CD8-positive, alpha-beta T cell (primary cell): ENCODE measurements at regions of chr16 and their contacts with region 1.

Region 1: DNA sequence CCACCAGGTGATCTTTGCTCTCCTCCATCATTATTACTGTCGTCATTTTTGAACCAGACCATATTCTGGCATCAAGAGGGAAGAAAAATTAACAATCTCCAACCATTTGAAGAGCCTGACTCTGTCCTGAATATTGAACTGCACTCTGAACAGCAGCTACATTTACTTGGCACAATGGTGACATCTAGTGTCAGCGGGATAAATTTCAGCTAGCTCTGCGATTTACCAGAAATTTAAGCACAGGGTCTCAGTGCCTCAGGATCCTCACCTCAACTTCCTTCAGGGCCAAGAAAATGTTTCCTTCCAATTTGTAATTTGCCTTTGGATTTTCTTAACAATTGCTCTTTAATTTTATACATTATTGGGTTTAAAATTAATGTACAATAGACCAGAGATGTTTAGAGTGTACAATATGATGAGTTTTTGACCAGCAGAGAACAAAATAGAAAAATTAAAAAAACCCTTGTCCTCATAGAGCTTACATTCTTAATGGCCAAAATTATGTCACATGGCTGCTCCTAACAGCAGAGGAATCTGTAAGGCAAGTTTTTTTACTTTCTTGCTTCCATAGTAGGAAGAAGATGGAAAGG is 10.7 kb upstream of the ZNF19 start:
- DNase-seq: peak; percentile 18 to 78 (median 51)
- ATAC-seq: peak; percentile 73
- H3K4me3 ChIP-seq: no peak overlapping the region
- H3K4me3 Mint-ChIP-seq: no peak overlapping the region
- H3K27ac ChIP-seq: no peak overlapping the region
- H3K27ac Mint-ChIP-seq: no peak overlapping the region
- H3K4me1 ChIP-seq: no peaks in the 10 kb centered on the region
- H3K4me1 Mint-ChIP-seq: no peaks in the 10 kb centered on the region
- H3K27me3 ChIP-seq: peaks cover 0 to 2% of the 10 kb centered on the region in 2 experiments
- H3K27me3 Mint-ChIP-seq: peaks cover 15% of the 10 kb centered on the region
- CTCF ChIP-seq: peak; percentile 74

Region 2: GRCh38 chr16:71412270-71413160 is 87.4 kb before region 1 on chr16:
- CTCF ChIA-PET with region 1: interaction called, 209 read pairs
- POLR2A ChIA-PET with region 1: interaction called, 3 read pairs
- intact Hi-C with region 1: loop called (anchors 1 kb)
- DNase-seq: peak; percentile 30 to 80 (median 69)
- ATAC-seq: peak; percentile 65
- H3K4me3 ChIP-seq: no peak overlapping the region
- H3K4me3 Mint-ChIP-seq: no peak overlapping the region
- H3K27ac ChIP-seq: no peak overlapping the region
- H3K27ac Mint-ChIP-seq: no peak overlapping the region
- H3K4me1 ChIP-seq: peaks cover 6% of the 10 kb centered on the region
- H3K4me1 Mint-ChIP-seq: peaks cover 11% of the 10 kb centered on the region
- H3K27me3 ChIP-seq: no peaks in the 10 kb centered on the region
- H3K27me3 Mint-ChIP-seq: peaks cover 14% of the 10 kb centered on the region
- CTCF ChIP-seq: peak; percentile 82

Region 3: DNA sequence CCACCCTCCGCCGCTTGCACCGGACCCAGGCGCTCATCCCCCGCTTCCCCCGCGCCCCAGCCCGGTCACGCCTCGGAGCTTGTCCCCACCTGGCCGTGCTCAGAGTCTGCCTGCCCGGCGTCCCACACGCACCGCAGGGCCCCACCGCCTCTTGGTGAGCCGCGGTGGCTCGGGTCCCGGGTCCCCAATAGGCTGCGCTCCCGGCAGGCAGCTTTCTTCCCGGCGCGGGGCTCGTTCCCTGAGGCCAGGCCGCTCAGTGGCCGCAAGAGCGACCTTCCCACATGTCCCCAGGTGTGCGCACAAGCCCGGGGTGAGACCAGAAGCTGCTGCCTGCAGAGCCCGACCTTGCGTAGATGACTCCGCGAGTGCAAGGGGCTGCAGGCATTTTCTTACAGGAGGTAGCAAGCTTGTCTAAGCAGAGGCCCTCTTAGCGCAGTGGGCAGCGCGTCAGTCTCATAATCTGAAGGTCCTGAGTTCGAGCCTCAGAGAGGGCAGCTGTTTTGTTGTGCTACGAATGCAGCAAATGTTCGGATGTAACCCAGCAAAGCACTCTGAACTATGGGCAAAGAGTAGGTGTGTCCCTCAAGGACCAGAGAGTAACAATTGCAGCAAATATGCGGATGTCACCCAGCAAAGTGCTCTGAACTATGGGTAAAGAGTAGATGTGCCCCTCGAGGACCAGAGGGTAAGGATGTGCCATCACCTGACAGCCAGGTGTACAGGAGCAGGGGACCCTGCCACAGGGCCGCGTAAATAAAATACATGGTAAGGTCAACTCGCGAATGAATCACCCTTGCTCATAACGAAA is 73.6 kb before region 1 on chr16:
- CTCF ChIA-PET with region 1: interaction called, 13 read pairs
- POLR2A ChIA-PET with region 1: no interaction called
- intact Hi-C with region 1: no loop called
- DNase-seq: peak in 4 of 9 experiments; percentile 25 to 85 (median 62)
- ATAC-seq: peak; percentile 91
- H3K4me3 ChIP-seq: peak overlapping the region in 1 of 2 experiments; percentile 43
- H3K4me3 Mint-ChIP-seq: peak overlapping the region; percentile 81
- H3K27ac ChIP-seq: peak overlapping the region in 1 of 2 experiments; percentile 22
- H3K27ac Mint-ChIP-seq: peak overlapping the region; percentile 88
- H3K4me1 ChIP-seq: no peaks in the 10 kb centered on the region
- H3K4me1 Mint-ChIP-seq: peaks cover 18% of the 10 kb centered on the region
- H3K27me3 ChIP-seq: peaks cover 0 to 6% of the 10 kb centered on the region in 2 experiments
- H3K27me3 Mint-ChIP-seq: peaks cover 25% of the 10 kb centered on the region
- CTCF ChIP-seq: no peak

Region 4: DNA sequence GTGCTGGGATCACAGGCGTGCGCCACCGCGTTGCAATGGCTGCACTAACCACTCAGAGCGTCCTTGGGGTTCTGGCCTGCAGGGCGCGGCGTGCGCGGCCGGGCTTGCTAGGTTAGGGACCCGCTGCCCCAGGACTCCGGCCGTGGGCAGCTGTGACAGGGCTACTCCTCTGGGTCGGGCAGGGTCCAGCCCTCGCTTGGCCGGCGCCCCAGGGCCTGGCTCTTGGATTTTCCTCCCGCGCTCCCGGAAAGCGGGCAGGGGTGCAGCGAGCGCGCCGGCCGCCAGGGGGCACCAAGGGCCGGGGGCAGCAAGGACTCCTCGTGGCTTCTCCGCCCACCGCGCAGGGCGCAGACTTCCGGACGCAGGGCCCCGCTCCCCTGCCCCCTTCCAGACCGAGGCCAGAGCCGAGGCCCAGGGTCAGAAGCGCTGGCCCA is 58.5 kb before region 1 on chr16:
- CTCF ChIA-PET with region 1: interaction called, 5 read pairs
- POLR2A ChIA-PET with region 1: no interaction called
- intact Hi-C with region 1: loop called (anchors 1 kb)
- DNase-seq: peak in 4 of 9 experiments; percentile 27 to 49 (median 34)
- ATAC-seq: no peak
- H3K4me3 ChIP-seq: no peak overlapping the region
- H3K4me3 Mint-ChIP-seq: no peak overlapping the region
- H3K27ac ChIP-seq: no peak overlapping the region
- H3K27ac Mint-ChIP-seq: no peak overlapping the region
- H3K4me1 ChIP-seq: no peaks in the 10 kb centered on the region
- H3K4me1 Mint-ChIP-seq: no peaks in the 10 kb centered on the region
- H3K27me3 ChIP-seq: no peaks in the 10 kb centered on the region
- H3K27me3 Mint-ChIP-seq: peaks cover 28% of the 10 kb centered on the region
- CTCF ChIP-seq: peak; percentile 40

Region 5: DNA sequence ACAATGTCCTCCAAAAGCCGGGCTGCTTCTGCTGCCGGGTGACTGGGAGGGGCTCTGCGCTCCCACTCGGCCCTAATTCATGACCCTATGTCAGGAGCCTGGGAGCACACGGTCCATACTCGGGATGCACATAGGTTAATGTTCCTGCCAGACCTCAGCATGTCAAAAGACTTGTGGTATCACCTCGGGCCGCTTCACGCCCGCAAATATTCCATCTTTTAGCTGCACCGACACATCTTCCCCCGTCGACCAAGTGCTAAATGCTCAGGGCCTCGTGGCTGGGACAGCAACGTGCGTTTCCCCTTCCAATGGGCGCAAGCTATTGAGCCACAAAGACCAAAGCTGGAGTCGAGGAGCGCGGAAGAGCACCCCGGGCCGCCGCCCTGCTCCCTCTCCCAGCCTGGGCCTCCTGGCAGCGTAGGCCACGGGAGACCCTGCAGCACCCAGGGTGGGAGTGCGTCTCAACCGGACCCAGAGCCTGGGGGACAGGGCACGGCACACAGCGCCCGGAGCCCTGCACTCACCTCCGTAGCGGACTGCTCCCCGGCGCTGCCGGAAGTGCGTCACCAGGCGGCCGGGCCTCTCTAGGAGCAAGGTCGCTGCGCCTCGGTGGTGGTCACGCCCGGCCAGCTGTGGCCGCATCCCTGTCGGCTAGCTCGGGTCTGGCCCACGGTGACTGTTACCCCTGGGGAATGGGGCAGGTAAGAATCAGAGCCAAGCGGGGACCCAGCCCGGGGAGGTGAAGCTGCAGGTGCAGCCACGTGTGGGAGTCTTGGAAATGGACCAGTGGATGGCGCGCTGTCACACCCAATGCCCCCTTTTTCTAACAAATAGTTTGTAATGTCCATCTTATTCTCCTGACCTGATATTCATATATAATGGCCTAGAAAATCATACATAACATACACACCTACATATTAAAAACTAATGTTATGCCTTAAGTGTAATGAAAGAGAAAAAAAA is 37.9 kb before region 1 on chr16 and contains the start of gene ZNF23:
- CTCF ChIA-PET with region 1: interaction called, 3 read pairs
- POLR2A ChIA-PET with region 1: no interaction called
- intact Hi-C with region 1: loop called in 1 of 2 experiments (anchors 5 kb)
- DNase-seq: peak; percentile 55 to 88 (median 79)
- ATAC-seq: peak; percentile 95
- H3K4me3 ChIP-seq: peak within 1 kb of the TSS; percentile 96 to 100
- H3K4me3 Mint-ChIP-seq: peak within 1 kb of the TSS; percentile 96
- H3K27ac ChIP-seq: peak within 1 kb of the TSS; percentile 92 to 93
- H3K27ac Mint-ChIP-seq: peak within 1 kb of the TSS; percentile 96
- H3K4me1 ChIP-seq: peaks cover 19% of the 10 kb centered on the region
- H3K4me1 Mint-ChIP-seq: peaks cover 32% of the 10 kb centered on the region
- H3K27me3 ChIP-seq: no peaks in the 10 kb centered on the region
- H3K27me3 Mint-ChIP-seq: no peaks in the 10 kb centered on the region
- CTCF ChIP-seq: peak; percentile 29
- total RNA-seq, gene ZNF23: 8.0 to 8.5 TPM

Region 6: GRCh38 chr16:71474864-71475263 is 25.0 kb before region 1 on chr16:
- CTCF ChIA-PET with region 1: no interaction called
- POLR2A ChIA-PET with region 1: no interaction called
- intact Hi-C with region 1: no loop called
- DNase-seq: no peak
- ATAC-seq: no peak
- H3K4me3 ChIP-seq: no peak overlapping the region
- H3K4me3 Mint-ChIP-seq: no peak overlapping the region
- H3K27ac ChIP-seq: no peak overlapping the region
- H3K27ac Mint-ChIP-seq: no peak overlapping the region
- H3K4me1 ChIP-seq: no peaks in the 10 kb centered on the region
- H3K4me1 Mint-ChIP-seq: no peaks in the 10 kb centered on the region
- H3K27me3 ChIP-seq: no peaks in the 10 kb centered on the region
- H3K27me3 Mint-ChIP-seq: no peaks in the 10 kb centered on the region
- CTCF ChIP-seq: no peak

Region 7: DNA sequence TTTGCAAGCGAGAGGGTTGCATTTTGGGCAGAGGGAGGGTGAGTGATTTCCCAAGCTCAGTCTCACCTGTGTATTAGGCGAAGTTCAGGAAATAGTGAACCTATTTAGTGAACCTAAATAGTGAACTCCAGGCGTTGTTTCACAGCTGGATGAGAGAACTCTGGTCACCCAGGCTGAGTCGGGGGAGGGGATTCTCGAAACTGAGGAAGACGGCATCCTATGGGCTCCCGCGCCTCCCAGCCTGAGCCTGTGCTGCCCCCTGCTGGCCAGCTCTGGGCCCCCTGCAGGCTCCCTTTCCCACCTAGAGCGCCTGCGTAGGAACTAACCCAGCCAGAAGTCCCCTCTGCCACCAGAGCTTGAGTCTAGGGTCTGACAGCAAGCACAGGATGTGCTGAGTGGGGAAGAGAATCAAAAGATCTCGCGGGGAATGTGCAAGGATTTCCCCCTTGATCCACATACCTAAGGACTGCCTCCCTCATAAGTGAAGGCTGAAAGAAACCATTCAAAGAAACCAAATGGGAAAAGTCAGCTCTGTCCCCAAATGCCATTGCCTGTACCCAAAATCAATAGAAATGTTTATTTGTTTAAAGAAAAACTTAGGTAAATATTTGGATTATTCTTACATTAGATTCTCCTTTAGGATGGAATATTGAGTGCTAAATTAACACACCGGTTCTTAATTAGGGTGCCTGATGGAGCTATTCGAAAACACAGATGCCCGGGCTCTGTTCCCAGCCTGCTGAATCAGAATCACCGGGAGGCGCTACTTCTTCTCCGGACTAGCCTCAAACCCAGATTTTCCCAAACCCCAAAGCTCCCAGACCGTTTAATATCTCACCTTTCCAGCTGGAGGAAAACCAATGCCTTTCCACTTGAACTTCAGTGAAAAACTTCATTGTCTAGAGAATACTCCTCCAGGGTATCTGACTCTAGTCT is 111.3 kb after region 1 on chr16:
- CTCF ChIA-PET with region 1: interaction called, 25 read pairs
- POLR2A ChIA-PET with region 1: no interaction called
- intact Hi-C with region 1: loop called in 1 of 2 experiments (anchors 1 kb)
- DNase-seq: peak; percentile 56 to 86 (median 79)
- ATAC-seq: peak; percentile 97
- H3K4me3 ChIP-seq: no peak overlapping the region
- H3K4me3 Mint-ChIP-seq: peak overlapping the region; percentile 22
- H3K27ac ChIP-seq: no peak overlapping the region
- H3K27ac Mint-ChIP-seq: no peak overlapping the region
- H3K4me1 ChIP-seq: no peaks in the 10 kb centered on the region
- H3K4me1 Mint-ChIP-seq: peaks cover 2% of the 10 kb centered on the region
- H3K27me3 ChIP-seq: no peaks in the 10 kb centered on the region
- H3K27me3 Mint-ChIP-seq: peaks cover 38% of the 10 kb centered on the region
- CTCF ChIP-seq: peak; percentile 88